PC-3 (cell line): ENCODE measurements at regions of chr2 and their contacts with region 1.

Region 1: GRCh38 chr2:151691631-151692030 is 42.6 kb downstream of the NEB start:
- DNase-seq: no peak
- ATAC-seq: no peak
- H3K4me3 ChIP-seq: no peak overlapping the region
- H3K27ac ChIP-seq: no peak overlapping the region
- H3K4me1 ChIP-seq: no peaks in the 10 kb centered on the region
- H3K27me3 ChIP-seq: peaks cover 62% of the 10 kb centered on the region
- CTCF ChIP-seq: no peak

Region 2: GRCh38 chr2:151478011-151478410 is 213.6 kb before region 1 on chr2:
- CTCF ChIA-PET with region 1: no interaction called
- POLR2A ChIA-PET with region 1: no interaction called
- intact Hi-C with region 1: no loop called
- DNase-seq: peak; percentile 54
- ATAC-seq: no peak
- H3K4me3 ChIP-seq: no peak overlapping the region
- H3K27ac ChIP-seq: no peak overlapping the region
- H3K4me1 ChIP-seq: 0 out of 2 replicates have a peak, but pooled peaks cover 3% of the 10 kb centered on the region
- H3K27me3 ChIP-seq: no peaks in the 10 kb centered on the region
- CTCF ChIP-seq: no peak

Region 3: DNA sequence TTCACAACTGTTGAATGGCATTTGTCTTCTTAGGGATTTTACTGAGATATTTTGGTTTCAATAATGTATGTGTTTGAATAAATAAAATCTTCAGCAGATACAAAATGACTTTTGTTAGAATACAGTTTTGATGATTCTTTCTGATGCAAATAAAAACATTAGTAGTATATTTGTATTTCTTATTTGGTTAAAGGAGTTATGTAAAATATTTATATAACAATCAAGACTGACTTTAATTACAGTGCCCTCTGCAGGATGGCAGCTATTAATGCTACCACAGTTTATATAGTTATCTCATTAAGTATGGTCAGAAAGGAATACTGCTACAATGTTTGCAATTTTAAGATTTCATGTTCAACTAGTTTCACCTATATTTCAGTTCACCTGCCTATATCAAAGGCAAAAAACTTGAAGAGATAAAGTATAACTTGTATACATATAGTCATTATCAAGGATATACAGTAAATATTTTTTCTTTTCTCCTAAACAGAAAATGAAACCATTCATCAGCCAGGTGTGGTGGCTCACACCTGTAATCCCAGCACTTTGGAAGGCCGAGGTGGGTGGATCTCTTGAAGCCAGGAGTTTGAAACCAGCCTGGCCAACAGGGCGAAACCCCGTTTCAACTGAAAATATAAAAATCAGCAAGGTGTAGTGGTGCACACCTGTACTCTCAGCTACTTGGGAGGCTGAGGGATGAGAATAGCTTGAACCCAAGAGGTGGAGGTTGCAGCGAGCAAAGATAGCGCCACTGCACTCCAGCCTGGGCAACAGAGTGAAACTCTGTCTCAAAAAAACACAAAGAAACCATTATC is 116.8 kb after region 1 on chr2:
- CTCF ChIA-PET with region 1: no interaction called
- POLR2A ChIA-PET with region 1: no interaction called
- intact Hi-C with region 1: loop called (anchors 5 kb)
- DNase-seq: peak; percentile 45
- ATAC-seq: peak; percentile 60
- H3K4me3 ChIP-seq: no peak overlapping the region
- H3K27ac ChIP-seq: no peak overlapping the region
- H3K4me1 ChIP-seq: no peaks in the 10 kb centered on the region
- H3K27me3 ChIP-seq: no peaks in the 10 kb centered on the region
- CTCF ChIP-seq: peak; percentile 70